ENCODE measurements at regions of chr3 and their contacts with region 1.

Region 1: DNA sequence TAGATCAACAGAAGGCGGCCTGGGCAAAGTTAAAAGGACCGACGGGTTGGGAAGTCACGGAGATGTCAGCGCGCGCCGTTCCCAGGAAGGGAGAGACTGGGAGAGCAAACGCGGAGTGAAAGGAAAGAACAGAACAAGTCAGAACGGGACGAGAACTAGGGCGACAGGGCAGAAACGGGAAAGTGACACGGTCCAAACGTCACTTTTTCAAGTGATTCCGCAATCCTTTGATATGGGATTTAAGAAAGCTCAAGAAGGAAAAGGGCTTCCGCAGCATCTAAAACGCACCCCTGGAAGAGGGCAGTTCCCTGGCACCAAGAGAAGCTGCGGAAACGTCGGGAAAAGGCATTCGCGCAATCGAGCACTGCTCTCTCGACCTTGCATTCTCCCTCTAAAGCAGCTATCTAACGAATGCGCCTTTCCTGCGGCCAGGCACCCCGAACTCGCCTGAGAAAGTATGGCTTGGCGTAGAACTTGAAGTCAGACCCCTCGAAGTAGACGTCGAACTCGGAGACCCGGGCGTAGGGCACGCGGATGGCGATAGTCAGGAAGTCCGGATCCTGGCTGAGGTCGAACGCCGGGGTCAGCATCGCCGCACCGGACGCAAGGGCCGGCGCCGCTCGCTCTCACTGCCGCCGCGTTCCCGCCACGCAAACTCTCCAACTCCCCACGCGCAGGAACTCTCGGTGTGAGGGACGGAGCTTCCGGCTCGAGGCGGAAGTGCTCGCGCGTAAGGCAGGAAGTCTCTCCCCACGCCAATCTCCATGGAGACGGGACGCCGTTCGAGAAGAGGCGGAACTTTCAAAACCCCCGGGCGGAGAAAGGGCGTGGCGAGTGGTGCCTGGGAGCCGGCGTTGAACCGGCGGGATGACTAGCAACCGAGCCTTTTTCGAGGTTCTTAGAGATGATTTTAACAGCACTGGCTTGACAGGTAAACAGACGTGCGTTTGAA is at the start of gene SHQ1:
- DNase-seq: peak; percentile 98
- ATAC-seq: peak; percentile 93
- H3K4me3 ChIP-seq: peak within 1 kb of the TSS; percentile 93
- H3K27ac ChIP-seq: peak within 1 kb of the TSS; percentile 18; the same call in 1 of the 2 replicates
- H3K4me1 ChIP-seq: peaks cover 28% of the 10 kb centered on the region
- H3K27me3 ChIP-seq: no peaks in the 10 kb centered on the region
- CTCF ChIP-seq: no peak
- total RNA-seq, gene SHQ1: 16.6 and 19.6 TPM in 2 replicates

Region 2: GRCh38 chr3:72872183-72872582 is 24.2 kb after region 1 on chr3:
- CTCF ChIA-PET with region 1: no interaction called
- POLR2A ChIA-PET with region 1: no interaction called
- intact Hi-C with region 1: loop called (anchors 1 kb)
- DNase-seq: no peak
- ATAC-seq: no peak
- H3K4me3 ChIP-seq: no peak overlapping the region
- H3K27ac ChIP-seq: no peak overlapping the region
- H3K4me1 ChIP-seq: no peaks in the 10 kb centered on the region
- H3K27me3 ChIP-seq: peaks cover 16% of the 10 kb centered on the region
- CTCF ChIP-seq: no peak

Region 3: DNA sequence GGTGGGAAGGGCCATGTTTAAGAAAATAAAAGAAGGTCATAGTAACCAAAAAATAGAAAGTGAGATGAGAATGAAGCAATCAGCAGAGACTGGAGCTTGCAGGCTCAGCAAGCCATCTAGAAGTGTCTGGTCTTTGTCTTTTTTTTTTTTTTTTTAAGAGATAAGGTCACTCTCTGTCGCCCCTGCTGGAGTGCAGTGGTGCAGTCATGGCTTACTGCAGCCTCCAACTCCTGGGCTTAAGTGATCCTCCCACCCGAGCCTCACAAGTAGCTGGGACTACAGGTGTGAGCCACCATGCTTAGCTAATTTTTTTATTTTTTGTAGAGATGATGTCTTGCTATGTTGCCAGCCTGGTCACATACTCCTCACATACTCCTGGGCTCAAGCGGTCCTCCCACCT is 76.0 kb after region 1 on chr3:
- CTCF ChIA-PET with region 1: no interaction called
- POLR2A ChIA-PET with region 1: no interaction called
- intact Hi-C with region 1: no loop called
- DNase-seq: no peak
- ATAC-seq: no peak
- H3K4me3 ChIP-seq: no peak overlapping the region
- H3K27ac ChIP-seq: no peak overlapping the region
- H3K4me1 ChIP-seq: no peaks in the 10 kb centered on the region
- H3K27me3 ChIP-seq: no peaks in the 10 kb centered on the region
- CTCF ChIP-seq: peak; percentile 37; the same call in 1 of the 2 replicates

Region 4: GRCh38 chr3:72938471-72939265 is 90.6 kb after region 1 on chr3:
- CTCF ChIA-PET with region 1: interaction called, 3 read pairs
- POLR2A ChIA-PET with region 1: no interaction called
- intact Hi-C with region 1: loop called (anchors 5 kb)
- DNase-seq: peak; percentile 66
- ATAC-seq: peak; percentile 92
- H3K4me3 ChIP-seq: no peak overlapping the region
- H3K27ac ChIP-seq: no peak overlapping the region
- H3K4me1 ChIP-seq: no peaks in the 10 kb centered on the region
- H3K27me3 ChIP-seq: no peaks in the 10 kb centered on the region
- CTCF ChIP-seq: peak; percentile 81

Region 5: GRCh38 chr3:73056014-73056844 is 208.2 kb after region 1 on chr3:
- CTCF ChIA-PET with region 1: interaction called, 19 read pairs
- POLR2A ChIA-PET with region 1: no interaction called
- intact Hi-C with region 1: loop called (anchors 1 kb)
- DNase-seq: peak; percentile 56
- ATAC-seq: peak; percentile 25; the same call in 1 of the 2 replicates
- H3K4me3 ChIP-seq: no peak overlapping the region
- H3K27ac ChIP-seq: no peak overlapping the region
- H3K4me1 ChIP-seq: peaks cover 14% of the 10 kb centered on the region
- H3K27me3 ChIP-seq: no peaks in the 10 kb centered on the region
- CTCF ChIP-seq: peak; percentile 78

Measured in PC-3 (cell line).